CD4-positive, alpha-beta memory T cell (primary cell): ENCODE measurements at regions of chr10 and their contacts with region 1.

Region 1: DNA sequence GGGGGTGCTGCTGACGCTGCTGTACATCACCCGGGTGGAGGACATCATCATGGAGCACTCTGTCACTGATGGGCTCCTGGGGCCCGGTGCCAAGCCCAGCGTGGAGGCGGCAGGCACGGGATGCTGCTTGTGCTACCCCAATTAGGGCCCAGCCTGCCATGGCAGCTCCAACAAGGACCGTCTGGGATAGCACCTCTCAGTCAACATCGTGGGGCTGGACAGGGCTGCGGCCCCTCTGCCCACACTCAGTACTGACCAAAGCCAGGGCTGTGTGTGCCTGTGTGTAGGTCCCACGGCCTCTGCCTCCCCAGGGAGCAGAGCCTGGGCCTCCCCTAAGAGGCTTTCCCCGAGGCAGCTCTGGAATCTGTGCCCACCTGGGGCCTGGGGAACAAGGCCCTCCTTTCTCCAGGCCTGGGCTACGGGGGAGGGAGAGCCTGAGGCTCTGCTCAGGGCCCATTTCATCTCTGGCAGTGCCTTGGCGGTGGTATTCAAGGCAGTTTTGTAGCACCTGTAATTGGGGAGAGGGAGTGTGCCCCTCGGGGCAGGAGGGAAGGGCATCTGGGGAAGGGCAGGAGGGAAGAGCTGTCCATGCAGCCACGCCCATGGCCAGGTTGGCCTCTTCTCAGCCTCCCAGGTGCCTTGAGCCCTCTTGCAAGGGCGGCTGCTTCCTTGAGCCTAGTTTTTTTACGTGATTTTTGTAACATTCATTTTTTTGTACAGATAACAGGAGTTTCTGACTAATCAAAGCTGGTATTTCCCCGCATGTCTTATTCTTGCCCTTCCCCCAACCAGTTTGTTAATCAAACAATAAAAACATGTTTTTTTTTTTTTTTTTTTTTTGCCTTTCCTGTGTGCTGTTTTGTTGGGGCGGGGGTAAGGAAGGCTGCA is 55.8 kb downstream of the TSPAN15 start:
- DNase-seq: peak in 1 of 5 donors; percentile 62
- H3K4me3 ChIP-seq: peak overlapping the region in 1 of 2 donors; percentile 51
- H3K4me3 Mint-ChIP-seq: peak overlapping the region; percentile 68 to 86 (median 78)
- H3K27ac ChIP-seq: peak overlapping the region; percentile 39
- H3K27ac Mint-ChIP-seq: peak overlapping the region; percentile 84 to 98 (median 92)
- H3K4me1 ChIP-seq: peaks cover 20% of the 10 kb centered on the region
- H3K4me1 Mint-ChIP-seq: peaks cover 9 to 20% (median 14%) of the 10 kb centered on the region in 4 donors
- H3K27me3 ChIP-seq: no peaks in the 10 kb centered on the region
- H3K27me3 Mint-ChIP-seq: no peaks in the 10 kb centered on the region

Region 2: GRCh38 chr10:69004821-69005220 is 502.3 kb before region 1 on chr10:
- CTCF ChIA-PET with region 1: no interaction called
- POLR2A ChIA-PET with region 1: no interaction called
- intact Hi-C with region 1: loop called (anchors 5 kb)
- DNase-seq: peak in 4 of 5 donors; percentile 62 to 70 (median 64)
- H3K4me3 ChIP-seq: no peak overlapping the region
- H3K4me3 Mint-ChIP-seq: no peak overlapping the region
- H3K27ac ChIP-seq: no peak overlapping the region
- H3K27ac Mint-ChIP-seq: peak overlapping the region in 1 of 7 donors; percentile 38
- H3K4me1 ChIP-seq: no peaks in the 10 kb centered on the region
- H3K4me1 Mint-ChIP-seq: peaks cover 1 to 5% (median 3%) of the 10 kb centered on the region in 4 donors
- H3K27me3 ChIP-seq: no peaks in the 10 kb centered on the region
- H3K27me3 Mint-ChIP-seq: no peaks in the 10 kb centered on the region

Region 3: DNA sequence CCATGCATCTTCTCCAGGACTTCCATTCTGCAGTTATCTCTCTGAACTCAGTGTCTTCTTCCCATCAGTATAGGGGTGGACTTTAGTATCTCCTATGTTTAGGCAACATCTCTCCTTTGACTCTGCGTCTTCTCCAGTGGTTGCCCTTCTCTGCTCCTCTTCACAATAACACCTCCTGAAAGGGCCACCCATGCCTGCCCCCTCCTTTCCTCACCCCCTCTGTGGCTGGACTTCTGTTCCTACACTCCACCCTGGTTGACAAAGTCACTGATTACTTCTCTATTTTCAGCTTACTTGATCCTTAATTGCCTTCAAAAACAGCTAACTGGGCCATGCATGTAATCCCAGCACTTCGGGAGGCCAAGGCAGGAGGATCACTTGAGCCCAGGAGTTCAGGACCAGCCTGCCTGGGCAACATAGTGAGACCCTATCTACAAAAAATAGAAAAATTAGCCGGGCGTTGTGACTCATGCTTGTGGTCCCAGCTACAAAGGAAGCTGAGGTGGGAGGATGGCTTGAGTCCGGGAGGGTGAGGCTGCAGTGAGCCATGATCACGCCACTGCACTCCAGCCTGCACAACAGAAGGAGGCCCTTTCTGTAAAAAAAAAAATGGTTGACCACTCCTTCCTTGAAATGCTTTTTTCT is 405.5 kb before region 1 on chr10:
- CTCF ChIA-PET with region 1: no interaction called
- POLR2A ChIA-PET with region 1: no interaction called
- intact Hi-C with region 1: no loop called
- DNase-seq: no peak
- H3K4me3 ChIP-seq: no peak overlapping the region
- H3K4me3 Mint-ChIP-seq: peak overlapping the region in 5 of 8 donors; percentile 15 to 71 (median 35)
- H3K27ac ChIP-seq: no peak overlapping the region
- H3K27ac Mint-ChIP-seq: peak overlapping the region in 6 of 7 donors; percentile 47 to 91 (median 73)
- H3K4me1 ChIP-seq: peaks cover 19% of the 10 kb centered on the region
- H3K4me1 Mint-ChIP-seq: peaks cover 25 to 46% (median 30%) of the 10 kb centered on the region in 4 donors
- H3K27me3 ChIP-seq: no peaks in the 10 kb centered on the region
- H3K27me3 Mint-ChIP-seq: no peaks in the 10 kb centered on the region

Region 4: GRCh38 chr10:69392481-69393000 is 114.5 kb before region 1 on chr10:
- CTCF ChIA-PET with region 1: interaction called, 11 read pairs
- POLR2A ChIA-PET with region 1: interaction called, 4 read pairs
- intact Hi-C with region 1: no loop called
- DNase-seq: peak; percentile 79 to 81 (median 80)
- H3K4me3 ChIP-seq: no peak overlapping the region
- H3K4me3 Mint-ChIP-seq: no peak overlapping the region
- H3K27ac ChIP-seq: peak overlapping the region; percentile 22
- H3K27ac Mint-ChIP-seq: peak overlapping the region; percentile 41 to 91 (median 79)
- H3K4me1 ChIP-seq: peaks cover 15% of the 10 kb centered on the region
- H3K4me1 Mint-ChIP-seq: peaks cover 7 to 17% (median 11%) of the 10 kb centered on the region in 4 donors
- H3K27me3 ChIP-seq: no peaks in the 10 kb centered on the region
- H3K27me3 Mint-ChIP-seq: no peaks in the 10 kb centered on the region

Region 5: GRCh38 chr10:69434169-69434568 is 72.9 kb before region 1 on chr10:
- CTCF ChIA-PET with region 1: interaction called, 13 read pairs
- POLR2A ChIA-PET with region 1: interaction called, 3 read pairs
- intact Hi-C with region 1: no loop called
- DNase-seq: no peak
- H3K4me3 ChIP-seq: no peak overlapping the region
- H3K4me3 Mint-ChIP-seq: no peak overlapping the region
- H3K27ac ChIP-seq: no peak overlapping the region
- H3K27ac Mint-ChIP-seq: no peak overlapping the region
- H3K4me1 ChIP-seq: no peaks in the 10 kb centered on the region
- H3K4me1 Mint-ChIP-seq: peaks cover 0 to under 1% (median 0%) of the 10 kb centered on the region in 4 donors
- H3K27me3 ChIP-seq: no peaks in the 10 kb centered on the region
- H3K27me3 Mint-ChIP-seq: peaks cover 2 to 9% of the 10 kb centered on the region in 2 donors

Region 6: DNA sequence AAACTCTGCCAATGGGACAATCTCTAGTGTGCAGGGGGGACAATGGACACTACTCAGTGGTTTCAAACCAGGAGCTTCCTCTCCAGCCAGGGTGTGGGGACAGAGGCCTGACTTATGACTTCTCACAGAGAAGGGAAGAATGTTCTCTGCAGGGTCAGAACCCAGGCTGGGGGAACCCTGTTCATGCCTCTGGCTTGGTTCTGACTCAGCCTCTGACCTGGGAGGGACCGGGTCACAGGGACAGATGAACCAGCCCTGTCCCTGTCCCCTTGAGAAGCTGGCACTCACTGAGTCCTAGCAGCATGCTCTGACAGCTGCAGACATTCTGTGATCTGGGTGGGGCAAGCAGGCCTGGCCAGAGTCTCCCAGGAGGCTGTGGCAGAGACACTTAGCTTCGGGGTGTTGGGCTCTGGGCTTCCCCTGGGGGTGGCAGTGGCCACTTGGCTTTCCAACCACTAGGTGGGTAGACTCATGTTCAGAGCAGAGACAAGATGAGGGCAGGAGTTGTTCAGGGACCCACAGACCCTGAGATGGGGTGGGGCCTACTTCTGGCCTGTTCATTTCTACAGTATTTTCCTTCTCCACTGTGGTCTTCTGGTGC is 42.2 kb before region 1 on chr10:
- CTCF ChIA-PET with region 1: no interaction called
- POLR2A ChIA-PET with region 1: no interaction called
- intact Hi-C with region 1: no loop called
- DNase-seq: peak in 3 of 5 donors; percentile 7 to 14 (median 10)
- H3K4me3 ChIP-seq: no peak overlapping the region
- H3K4me3 Mint-ChIP-seq: peak overlapping the region in 7 of 8 donors; percentile 4 to 72 (median 51)
- H3K27ac ChIP-seq: peak overlapping the region; percentile 30
- H3K27ac Mint-ChIP-seq: peak overlapping the region; percentile 85 to 92 (median 88)
- H3K4me1 ChIP-seq: peaks cover 52% of the 10 kb centered on the region
- H3K4me1 Mint-ChIP-seq: peaks cover 10 to 68% (median 35%) of the 10 kb centered on the region in 4 donors
- H3K27me3 ChIP-seq: no peaks in the 10 kb centered on the region
- H3K27me3 Mint-ChIP-seq: no peaks in the 10 kb centered on the region

Region 7: GRCh38 chr10:69629897-69630650 is 123.0 kb after region 1 on chr10 and contains the start of gene FAM241B:
- CTCF ChIA-PET with region 1: interaction called, 338 read pairs
- POLR2A ChIA-PET with region 1: interaction called, 4 read pairs
- intact Hi-C with region 1: loop called (anchors 2 kb)
- DNase-seq: peak; percentile 75 to 81 (median 78)
- H3K4me3 ChIP-seq: peak within 1 kb of the TSS; percentile 49 to 69
- H3K4me3 Mint-ChIP-seq: peak within 1 kb of the TSS; percentile 63 to 81 (median 78)
- H3K27ac ChIP-seq: peak within 1 kb of the TSS; percentile 26
- H3K27ac Mint-ChIP-seq: peak within 1 kb of the TSS; percentile 51 to 81 (median 70)
- H3K4me1 ChIP-seq: peaks cover 25% of the 10 kb centered on the region
- H3K4me1 Mint-ChIP-seq: peaks cover 14 to 22% (median 18%) of the 10 kb centered on the region in 4 donors
- H3K27me3 ChIP-seq: no peaks in the 10 kb centered on the region
- H3K27me3 Mint-ChIP-seq: no peaks in the 10 kb centered on the region
- total RNA-seq, gene FAM241B: 9.4 to 10.7 TPM